Right cardiac atrium (tissue), 5 donors: ENCODE measurements at regions of chr12 and their contacts with region 1.

Region 1: DNA sequence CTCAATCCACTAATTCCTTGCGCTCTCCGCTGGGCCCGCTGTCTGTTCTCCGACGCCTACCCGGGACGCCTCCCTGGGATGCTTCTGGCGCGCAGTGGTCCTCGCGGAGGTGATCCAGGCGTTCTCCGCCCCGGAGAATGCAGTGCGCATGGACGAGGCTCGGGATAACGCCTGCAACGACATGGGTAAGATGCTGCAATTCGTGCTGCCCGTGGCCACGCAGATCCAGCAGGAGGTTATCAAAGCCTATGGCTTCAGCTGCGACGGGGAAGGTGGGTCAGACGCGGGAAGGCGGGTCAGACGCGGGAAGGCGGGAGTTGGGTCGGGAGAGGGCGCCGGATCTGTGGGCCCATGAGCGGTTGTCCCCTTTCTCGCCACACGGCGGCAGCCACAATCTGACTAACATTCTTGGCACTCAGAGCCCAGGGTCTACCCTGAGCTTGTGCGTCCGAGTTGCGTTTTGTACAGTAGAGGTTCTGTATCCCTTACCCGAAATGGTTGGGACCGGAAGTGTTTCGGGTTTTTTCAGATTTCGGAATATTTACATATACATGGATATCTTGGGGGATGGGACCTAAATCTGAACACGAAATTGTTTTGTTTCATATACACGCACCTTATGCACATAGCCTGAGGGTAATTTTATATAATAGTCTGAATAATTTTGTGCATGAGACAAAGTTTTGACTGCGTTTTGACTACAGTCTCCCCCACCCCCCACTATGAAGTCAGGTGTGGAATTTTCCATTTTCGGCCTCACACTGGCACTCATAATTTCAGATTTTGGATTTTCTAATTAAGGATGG is 762 bp downstream of the C12orf57 start:
- DNase-seq: peak; percentile 93 to 97 (median 97)
- ATAC-seq: peak; percentile 78 to 79
- H3K4me3 ChIP-seq: peak overlapping the region; percentile 35
- H3K27ac ChIP-seq: peak overlapping the region; percentile 96
- H3K4me1 ChIP-seq: no peaks in the 10 kb centered on the region
- H3K27me3 ChIP-seq: no peaks in the 10 kb centered on the region

Region 2: DNA sequence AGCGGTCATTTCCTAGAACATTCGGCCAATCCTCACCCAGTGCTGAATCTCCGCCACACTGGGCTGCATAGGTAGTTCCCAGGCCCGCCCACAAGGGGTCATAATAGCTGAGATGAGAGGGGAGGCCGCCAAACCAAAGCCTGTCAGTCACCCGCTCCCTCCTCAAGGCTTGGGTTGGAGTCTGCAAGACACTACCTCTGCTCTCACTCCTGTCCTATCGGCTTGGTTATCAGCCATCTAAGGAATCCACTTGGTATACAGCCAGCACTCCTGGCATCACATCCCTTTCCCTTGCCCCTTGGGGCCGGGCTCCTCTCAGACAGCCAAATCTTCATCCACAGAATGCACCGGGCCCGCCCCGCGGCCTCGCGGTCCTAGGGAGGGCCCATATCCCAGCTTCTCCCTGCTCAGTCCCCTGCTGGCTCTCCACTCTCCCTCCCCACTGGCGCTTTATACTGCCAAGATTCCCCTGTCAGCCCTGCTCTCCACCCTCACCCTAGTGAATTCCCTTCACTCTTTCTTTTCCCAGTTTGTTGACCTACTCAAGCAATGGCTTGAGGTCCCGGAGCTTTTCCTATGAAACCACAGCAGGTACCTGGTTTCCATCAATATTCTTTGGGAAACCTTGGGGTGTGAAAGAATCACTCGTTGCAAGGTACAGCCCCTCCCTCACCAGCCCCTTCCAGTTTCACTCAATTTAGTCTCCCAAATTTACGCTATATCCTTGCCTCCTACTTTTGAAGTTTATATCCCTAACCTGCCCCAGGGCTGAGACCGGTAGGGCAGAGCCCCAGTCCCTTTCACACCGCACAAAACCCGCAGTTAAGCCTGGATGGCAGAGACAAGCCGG is 390.2 kb before region 1 on chr12:
- intact Hi-C with region 1: no loop called
- DNase-seq: peak; percentile 78 to 90 (median 89)
- ATAC-seq: peak; percentile 37 to 48
- H3K4me3 ChIP-seq: peak overlapping the region; percentile 91
- H3K27ac ChIP-seq: peak overlapping the region; percentile 85
- H3K4me1 ChIP-seq: peaks cover 12% of the 10 kb centered on the region
- H3K27me3 ChIP-seq: no peaks in the 10 kb centered on the region

Region 3: DNA sequence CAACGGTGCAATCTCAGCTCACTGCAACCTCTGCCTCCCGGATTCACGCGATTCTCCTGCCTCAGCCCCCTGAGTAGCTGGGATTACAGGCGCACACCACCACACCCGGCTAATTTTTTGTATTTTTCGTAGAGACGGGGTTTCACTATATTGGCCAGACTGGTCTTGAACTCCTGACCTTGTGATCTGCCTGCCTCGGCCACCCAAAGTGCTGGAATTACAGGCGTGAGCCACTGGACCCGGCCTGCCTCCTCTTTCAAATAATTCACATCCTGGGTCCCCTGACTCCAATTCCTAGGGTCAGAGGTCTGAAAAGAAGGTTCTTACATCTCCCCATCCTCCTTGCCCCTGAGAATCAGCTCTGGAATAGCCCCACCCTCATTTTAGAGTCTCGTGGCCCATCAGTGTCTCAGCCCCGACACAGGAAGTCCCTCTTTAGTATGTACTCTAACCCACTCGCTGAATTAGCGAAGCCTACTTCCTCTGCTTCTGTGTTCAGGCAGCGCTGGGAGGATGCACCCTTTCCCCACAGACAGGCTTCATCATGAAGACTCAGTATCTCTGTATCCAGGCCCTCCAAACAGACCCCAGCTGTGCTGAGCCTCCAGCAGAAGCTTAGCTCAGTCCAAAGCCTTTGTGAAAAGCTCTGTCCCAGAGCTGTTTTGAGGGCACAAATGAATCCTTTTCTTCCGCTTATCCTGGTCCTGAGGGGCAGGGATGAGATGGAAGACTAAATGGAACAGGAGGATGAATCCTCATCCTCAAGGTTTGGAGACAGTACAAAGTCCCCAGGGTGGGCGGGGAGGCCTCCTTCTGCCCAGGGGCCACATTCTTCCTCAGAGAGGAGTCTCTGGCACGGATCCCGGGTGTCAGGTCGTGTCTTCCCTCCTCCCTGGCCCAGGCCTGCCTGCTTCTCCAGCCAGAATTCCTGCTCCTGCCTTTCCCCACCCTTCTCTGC is 312.3 kb before region 1 on chr12:
- intact Hi-C with region 1: no loop called
- DNase-seq: no peak
- ATAC-seq: peak; percentile 17 to 42
- H3K4me3 ChIP-seq: no peak overlapping the region
- H3K27ac ChIP-seq: no peak overlapping the region
- H3K4me1 ChIP-seq: peaks cover 2% of the 10 kb centered on the region
- H3K27me3 ChIP-seq: no peaks in the 10 kb centered on the region

Region 4: DNA sequence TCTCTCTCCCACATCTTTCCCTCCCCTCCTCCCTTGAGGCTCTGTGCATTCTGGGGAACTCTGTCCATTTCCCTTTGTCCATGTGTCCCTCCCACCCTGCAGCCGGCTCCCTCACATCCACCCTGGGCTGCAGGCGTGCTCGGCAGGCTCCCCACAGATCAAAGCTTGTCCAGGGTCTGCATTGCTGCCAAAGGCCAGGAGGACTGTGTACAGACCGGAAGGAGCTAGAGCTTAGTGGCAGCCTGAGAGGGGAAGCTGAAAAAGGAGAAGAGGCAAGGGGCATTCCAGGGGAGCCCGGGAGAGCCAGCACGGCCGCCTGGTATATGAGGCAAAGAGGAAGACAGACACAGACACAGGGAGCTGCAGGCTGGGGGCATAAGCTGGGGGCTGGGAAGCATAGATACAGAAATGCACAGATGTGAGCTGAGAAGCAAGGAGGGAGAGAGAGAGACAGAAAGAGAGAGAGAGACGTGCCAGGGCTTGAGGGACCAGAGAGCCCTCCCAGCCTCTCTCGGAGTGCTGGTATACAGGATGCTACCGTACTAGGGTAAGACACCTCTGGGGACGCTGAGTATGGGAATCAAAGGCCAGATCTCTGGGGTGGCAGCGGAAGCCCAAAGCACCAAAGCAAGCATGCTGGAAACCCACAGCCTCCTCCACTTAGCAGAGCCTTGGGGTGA is 151.9 kb before region 1 on chr12:
- intact Hi-C with region 1: no loop called
- DNase-seq: peak in 2 of 3 donors; percentile 74 to 75
- ATAC-seq: peak; percentile 60 to 67
- H3K4me3 ChIP-seq: no peak overlapping the region
- H3K27ac ChIP-seq: no peak overlapping the region
- H3K4me1 ChIP-seq: no peaks in the 10 kb centered on the region
- H3K27me3 ChIP-seq: no peaks in the 10 kb centered on the region

Region 5: DNA sequence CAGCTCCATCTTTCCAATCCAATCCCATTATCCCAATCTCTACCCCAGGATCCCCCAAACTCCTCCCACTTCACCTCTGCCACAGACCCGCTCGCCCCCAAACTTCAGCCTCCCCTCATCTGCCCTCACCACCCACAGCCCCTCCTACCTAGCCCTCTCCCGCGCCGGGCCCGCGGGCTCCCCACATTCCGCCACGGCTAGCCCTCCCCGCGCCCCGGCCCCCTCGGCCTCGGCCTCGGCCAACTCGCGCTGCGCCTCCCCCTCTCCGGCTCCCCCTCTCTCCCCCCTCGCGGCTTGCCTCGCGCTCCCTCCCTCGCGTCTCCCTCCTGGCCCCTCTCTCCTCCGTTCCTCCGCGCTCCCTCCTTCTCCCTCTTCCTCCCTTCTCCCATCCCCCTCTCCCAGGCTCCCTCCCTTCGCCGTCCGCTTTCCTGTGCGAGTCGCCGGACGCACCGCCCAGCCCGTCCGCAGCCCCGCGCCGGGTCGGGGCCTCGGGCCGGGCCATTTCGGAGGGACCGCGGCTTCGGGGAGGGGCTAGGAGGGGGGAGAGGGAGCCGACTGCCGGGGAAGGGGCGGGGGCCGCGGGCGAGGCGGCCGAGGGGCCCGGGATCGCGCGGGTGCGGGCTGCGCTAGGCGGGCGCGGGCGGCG is 17.1 kb before region 1 on chr12 and contains the start of gene ATN1:
- intact Hi-C with region 1: loop called in 1 of 4 experiments (anchors 2 kb)
- DNase-seq: peak; percentile 87 to 95 (median 93)
- ATAC-seq: peak; percentile 56 to 70
- H3K4me3 ChIP-seq: peak within 1 kb of the TSS; percentile 99
- H3K27ac ChIP-seq: peak within 1 kb of the TSS; percentile 100
- H3K4me1 ChIP-seq: peaks cover 18% of the 10 kb centered on the region
- H3K27me3 ChIP-seq: no peaks in the 10 kb centered on the region
- total RNA-seq, gene ATN1: 85.3 to 89.3 (median 88.6) TPM

Region 6: GRCh38 chr12:7797698-7798398 is 853.3 kb after region 1 on chr12:
- intact Hi-C with region 1: no loop called
- DNase-seq: no peak
- ATAC-seq: no peak
- H3K4me3 ChIP-seq: no peak overlapping the region
- H3K27ac ChIP-seq: no peak overlapping the region
- H3K4me1 ChIP-seq: no peaks in the 10 kb centered on the region
- H3K27me3 ChIP-seq: no peaks in the 10 kb centered on the region